A673 (cell line): ENCODE measurements at regions of chr15 and their contacts with region 1.

Region 1: DNA sequence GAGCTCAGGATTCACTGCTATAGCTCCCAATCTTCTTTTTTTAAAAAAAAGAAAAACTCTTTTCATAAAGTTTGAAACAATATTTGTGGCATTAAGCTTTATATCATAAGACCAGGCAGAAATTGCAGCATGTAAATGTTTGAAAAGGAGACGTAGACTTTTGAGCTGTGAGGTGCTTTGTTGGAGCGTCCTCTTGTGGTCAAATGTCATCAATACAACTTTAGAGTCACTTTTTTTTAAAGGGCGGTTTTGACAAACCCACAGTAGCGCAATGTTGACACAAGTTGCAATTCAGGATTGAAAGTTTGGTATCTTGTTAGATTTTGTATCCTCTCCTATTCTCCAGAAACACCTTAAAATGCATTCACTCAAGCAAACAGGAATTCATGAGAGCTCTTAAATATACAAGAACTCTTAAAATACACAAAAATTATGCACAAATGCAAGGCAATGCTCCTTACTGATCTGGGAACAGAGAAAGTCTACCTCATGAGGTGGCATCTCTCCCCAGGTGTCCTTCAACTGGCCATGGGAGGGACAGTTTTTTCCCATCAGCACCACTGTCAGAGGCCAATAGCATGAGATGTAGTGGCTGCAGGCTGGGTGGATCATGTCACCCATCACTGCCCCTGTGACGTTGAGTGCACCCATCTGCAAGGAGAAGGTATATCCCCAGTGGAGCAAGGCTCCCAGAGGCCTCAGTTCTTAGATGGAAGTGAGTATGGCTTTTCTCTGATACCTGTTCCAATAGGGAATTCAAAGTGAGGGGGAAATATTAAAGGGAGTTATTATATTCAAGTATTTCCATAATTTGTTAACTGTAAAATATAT is 70.7 kb downstream of the ANXA2 start:
- DNase-seq: peak; percentile 80
- H3K4me3 ChIP-seq: peak overlapping the region; percentile 11
- H3K27ac ChIP-seq: no peak overlapping the region
- H3K4me1 ChIP-seq: peaks cover 30% of the 10 kb centered on the region
- H3K27me3 ChIP-seq: no peaks in the 10 kb centered on the region
- CTCF ChIP-seq: peak; percentile 88

Region 2: DNA sequence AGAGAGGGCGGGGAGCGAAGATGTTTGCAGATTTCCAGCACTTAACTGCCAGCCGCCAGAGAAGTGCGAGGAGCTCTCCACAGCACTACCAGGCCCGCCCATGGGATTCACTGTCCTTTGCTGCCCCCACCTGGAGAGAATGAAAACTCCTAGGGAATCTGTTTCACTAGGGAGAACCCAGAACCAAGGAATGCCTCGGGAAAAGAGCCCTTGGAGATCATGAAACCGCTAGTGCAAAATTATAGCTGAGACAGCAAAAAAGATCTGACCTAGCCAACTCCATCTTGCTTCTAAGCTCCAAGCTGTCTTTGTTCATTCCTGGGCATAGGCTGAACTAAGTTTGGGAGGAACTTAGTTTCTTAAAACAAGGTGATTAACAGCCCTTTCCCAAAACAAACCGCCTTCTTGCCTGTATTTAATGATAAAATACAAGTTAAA is 798.1 kb before region 1 on chr15:
- CTCF ChIA-PET with region 1: no interaction called
- POLR2A ChIA-PET with region 1: no interaction called
- intact Hi-C with region 1: loop called (anchors 10 kb)
- DNase-seq: peak; percentile 93
- H3K4me3 ChIP-seq: no peak overlapping the region
- H3K27ac ChIP-seq: no peak overlapping the region
- H3K4me1 ChIP-seq: no peaks in the 10 kb centered on the region
- H3K27me3 ChIP-seq: no peaks in the 10 kb centered on the region
- CTCF ChIP-seq: peak; percentile 81

Region 3: DNA sequence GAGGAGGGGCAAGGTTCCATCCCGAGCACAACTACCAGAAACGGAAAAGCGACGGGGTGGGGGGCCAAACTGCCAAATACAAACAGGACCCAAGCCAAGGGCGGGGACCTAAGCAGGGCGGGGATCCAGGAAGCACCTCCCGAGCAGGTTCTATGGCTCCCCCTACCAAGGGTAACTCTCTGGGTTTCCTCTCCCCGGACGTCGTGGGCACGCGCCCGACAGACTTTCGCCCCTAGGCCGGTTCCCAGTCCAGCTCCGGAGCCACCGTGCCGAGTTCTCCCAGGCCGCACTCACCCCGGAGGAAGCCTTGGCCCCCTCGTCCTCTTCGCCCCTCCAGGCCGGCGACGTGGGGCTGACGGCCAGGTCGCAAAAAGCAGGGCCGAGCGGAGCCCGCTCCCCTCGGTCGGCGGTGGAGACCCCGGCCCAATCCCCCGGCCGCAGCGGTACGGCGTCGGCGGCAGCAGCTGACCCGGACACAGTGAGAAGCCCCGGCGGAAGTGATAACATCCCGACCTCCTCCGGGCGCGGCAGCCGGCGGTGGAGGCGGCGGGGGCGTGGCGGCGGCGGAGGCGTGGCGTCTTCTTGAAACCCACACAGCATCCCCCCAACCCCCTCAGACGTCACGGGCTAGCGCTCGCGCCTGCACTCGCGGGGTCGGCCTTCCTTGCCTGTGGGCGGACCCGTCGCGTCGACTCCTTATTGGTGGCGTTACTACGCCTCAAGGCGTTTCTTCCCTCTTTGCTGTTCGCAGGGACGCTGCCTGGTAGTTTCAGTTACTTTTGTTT is 638.0 kb before region 1 on chr15 and contains the start of gene BNIP2:
- CTCF ChIA-PET with region 1: interaction called, 9 read pairs
- POLR2A ChIA-PET with region 1: no interaction called
- intact Hi-C with region 1: loop called (anchors 2 kb)
- DNase-seq: peak; percentile 99
- H3K4me3 ChIP-seq: peak within 1 kb of the TSS; percentile 92
- H3K27ac ChIP-seq: peak within 1 kb of the TSS; percentile 96
- H3K4me1 ChIP-seq: peaks cover 22% of the 10 kb centered on the region
- H3K27me3 ChIP-seq: no peaks in the 10 kb centered on the region
- CTCF ChIP-seq: no peak
- total RNA-seq, gene BNIP2: 58.1 and 59.3 TPM in 2 replicates

Region 4: DNA sequence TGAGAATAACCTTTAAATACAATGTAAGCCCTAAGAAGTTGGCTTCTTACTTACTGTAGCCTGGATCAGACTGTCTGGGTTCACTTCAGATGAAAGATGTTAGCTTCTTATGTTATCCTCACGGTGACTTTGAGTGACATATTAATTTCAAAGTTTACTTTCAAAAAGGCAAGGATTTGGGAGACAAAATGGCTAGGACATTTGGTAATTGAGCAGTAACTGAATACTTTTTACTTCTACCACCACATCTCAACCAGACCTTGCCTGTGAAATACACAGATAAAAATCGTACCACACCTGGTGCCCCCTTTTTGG is 601.9 kb before region 1 on chr15:
- CTCF ChIA-PET with region 1: interaction called, 20 read pairs
- POLR2A ChIA-PET with region 1: no interaction called
- intact Hi-C with region 1: loop called (anchors 1 kb)
- DNase-seq: no peak
- H3K4me3 ChIP-seq: no peak overlapping the region
- H3K27ac ChIP-seq: no peak overlapping the region
- H3K4me1 ChIP-seq: no peaks in the 10 kb centered on the region
- H3K27me3 ChIP-seq: peaks cover 11% of the 10 kb centered on the region
- CTCF ChIP-seq: no peak

Region 5: GRCh38 chr15:59917504-59918157 is 409.4 kb before region 1 on chr15:
- CTCF ChIA-PET with region 1: no interaction called
- POLR2A ChIA-PET with region 1: no interaction called
- intact Hi-C with region 1: loop called (anchors 2 kb)
- DNase-seq: peak; percentile 65
- H3K4me3 ChIP-seq: no peak overlapping the region
- H3K27ac ChIP-seq: no peak overlapping the region
- H3K4me1 ChIP-seq: no peaks in the 10 kb centered on the region
- H3K27me3 ChIP-seq: peaks cover 49% of the 10 kb centered on the region
- CTCF ChIP-seq: peak; percentile 61

Region 6: DNA sequence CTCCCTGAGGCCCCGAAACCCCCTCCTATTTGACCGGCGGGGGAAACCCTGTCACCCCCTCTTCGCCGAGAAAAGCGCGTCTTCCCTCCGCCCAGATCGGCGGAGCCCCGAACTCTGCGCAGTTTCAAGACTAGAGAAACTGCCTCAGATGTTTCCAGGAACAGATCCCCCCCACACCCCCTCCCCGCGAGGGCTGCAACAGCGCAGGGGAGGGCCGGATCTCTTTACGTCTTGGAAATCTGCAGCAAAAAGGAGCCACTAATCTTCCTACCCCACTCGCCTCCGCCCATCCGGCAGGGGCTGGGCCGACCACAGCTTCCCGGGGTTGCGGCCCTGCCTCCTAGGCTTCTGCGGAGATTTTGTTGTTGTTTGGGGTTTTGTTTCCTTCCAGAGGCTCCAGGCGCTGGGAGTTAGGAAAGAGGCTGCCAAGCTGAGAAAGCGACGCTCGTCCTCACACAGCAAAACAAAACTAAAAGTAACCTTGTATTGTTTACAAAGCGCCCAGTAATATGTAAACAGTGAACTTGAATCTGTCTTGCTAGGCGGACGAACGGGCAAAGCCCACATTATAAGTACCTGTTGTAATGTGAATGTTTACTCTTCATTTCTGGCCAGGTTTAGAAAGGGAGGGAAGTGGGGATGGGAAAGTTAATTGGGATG is 320.7 kb before region 1 on chr15:
- CTCF ChIA-PET with region 1: no interaction called
- POLR2A ChIA-PET with region 1: no interaction called
- intact Hi-C with region 1: loop called (anchors 10 kb)
- DNase-seq: peak; percentile 35
- H3K4me3 ChIP-seq: peak overlapping the region; percentile 37
- H3K27ac ChIP-seq: no peak overlapping the region
- H3K4me1 ChIP-seq: peaks cover 22% of the 10 kb centered on the region
- H3K27me3 ChIP-seq: peaks cover 99% of the 10 kb centered on the region
- CTCF ChIP-seq: no peak

Region 7: DNA sequence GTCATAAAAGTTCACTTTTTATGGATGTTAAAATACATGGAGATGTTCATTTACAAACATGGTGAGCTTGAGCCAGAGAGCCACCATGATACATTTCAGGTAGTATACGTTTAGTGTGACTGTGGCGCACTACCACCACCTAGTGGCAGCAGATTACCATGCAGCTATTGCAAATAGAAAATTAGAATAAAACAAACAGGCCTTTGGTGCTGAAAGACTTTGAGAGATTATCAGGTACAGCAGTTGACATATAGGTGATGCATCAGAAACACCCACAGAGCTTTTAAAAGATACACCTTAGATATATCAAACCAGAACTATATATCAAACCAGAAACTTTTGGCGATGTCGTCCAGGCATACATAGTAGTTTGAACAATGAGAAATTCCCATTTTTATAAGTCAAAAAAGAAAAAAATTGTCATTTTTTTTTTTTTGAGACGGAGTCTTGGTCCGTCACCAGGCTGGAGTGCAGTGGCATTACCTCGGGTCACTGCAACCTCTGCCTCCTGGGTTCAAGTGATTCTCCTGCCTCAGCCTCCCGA is 193.9 kb after region 1 on chr15:
- CTCF ChIA-PET with region 1: interaction called, 8 read pairs
- POLR2A ChIA-PET with region 1: no interaction called
- intact Hi-C with region 1: loop called (anchors 1 kb)
- DNase-seq: peak; percentile 78
- H3K4me3 ChIP-seq: no peak overlapping the region
- H3K27ac ChIP-seq: no peak overlapping the region
- H3K4me1 ChIP-seq: no peaks in the 10 kb centered on the region
- H3K27me3 ChIP-seq: no peaks in the 10 kb centered on the region
- CTCF ChIP-seq: peak; percentile 94